ENCODE measurements at regions of chr20 and their contacts with region 1.

Region 1: GRCh38 chr20:38893565-38894090 is 32.6 kb upstream of the FAM83D start:
- DNase-seq: peak; percentile 85
- H3K4me3 Mint-ChIP-seq: no peak overlapping the region
- H3K27ac Mint-ChIP-seq: peak overlapping the region; percentile 42
- H3K4me1 Mint-ChIP-seq: peaks cover 33% of the 10 kb centered on the region
- H3K27me3 Mint-ChIP-seq: no peaks in the 10 kb centered on the region

Region 2: GRCh38 chr20:38550274-38550673 is 343.4 kb before region 1 on chr20:
- CTCF ChIA-PET with region 1: no interaction called
- intact Hi-C with region 1: no loop called
- DNase-seq: peak; percentile 8
- H3K4me3 Mint-ChIP-seq: no peak overlapping the region
- H3K27ac Mint-ChIP-seq: no peak overlapping the region
- H3K4me1 Mint-ChIP-seq: peaks cover 9% of the 10 kb centered on the region
- H3K27me3 Mint-ChIP-seq: no peaks in the 10 kb centered on the region

Region 3: GRCh38 chr20:38730989-38731737 is 162.5 kb before region 1 on chr20:
- CTCF ChIA-PET with region 1: interaction called, 22 read pairs
- intact Hi-C with region 1: loop called (anchors 1 kb)
- DNase-seq: peak; percentile 85
- H3K4me3 Mint-ChIP-seq: peak overlapping the region; percentile 61
- H3K27ac Mint-ChIP-seq: no peak overlapping the region
- H3K4me1 Mint-ChIP-seq: peaks cover 39% of the 10 kb centered on the region
- H3K27me3 Mint-ChIP-seq: peaks cover 85% of the 10 kb centered on the region

Region 4: GRCh38 chr20:38883081-38883980 is 10.3 kb before region 1 on chr20:
- CTCF ChIA-PET with region 1: interaction called, 22 read pairs
- intact Hi-C with region 1: no loop called
- DNase-seq: no peak
- H3K4me3 Mint-ChIP-seq: no peak overlapping the region
- H3K27ac Mint-ChIP-seq: no peak overlapping the region
- H3K4me1 Mint-ChIP-seq: peaks cover 19% of the 10 kb centered on the region
- H3K27me3 Mint-ChIP-seq: no peaks in the 10 kb centered on the region

Measured in activated naive CD4-positive, alpha-beta T cell treated with anti-CD3 and anti-CD28 coated beads for 36 hours (primary cell).